Spleen (tissue), 13 donors: ENCODE measurements at regions of chr22 and their contacts with region 1.

Region 1: GRCh38 chr22:33579448-33580093 is 340.7 kb downstream of the LARGE1 start:
- DNase-seq: no peak
- H3K4me3 ChIP-seq: no peak overlapping the region
- H3K27ac ChIP-seq: peak overlapping the region in 1 of 8 donors; percentile 1
- H3K4me1 ChIP-seq: peaks cover 0 to 50% (median 10%) of the 10 kb centered on the region in 6 donors
- H3K27me3 ChIP-seq: no peaks in the 10 kb centered on the region
- CTCF ChIP-seq: peak; percentile 60 to 87 (median 82)
- POLR2A ChIP-seq: no peak

Region 2: DNA sequence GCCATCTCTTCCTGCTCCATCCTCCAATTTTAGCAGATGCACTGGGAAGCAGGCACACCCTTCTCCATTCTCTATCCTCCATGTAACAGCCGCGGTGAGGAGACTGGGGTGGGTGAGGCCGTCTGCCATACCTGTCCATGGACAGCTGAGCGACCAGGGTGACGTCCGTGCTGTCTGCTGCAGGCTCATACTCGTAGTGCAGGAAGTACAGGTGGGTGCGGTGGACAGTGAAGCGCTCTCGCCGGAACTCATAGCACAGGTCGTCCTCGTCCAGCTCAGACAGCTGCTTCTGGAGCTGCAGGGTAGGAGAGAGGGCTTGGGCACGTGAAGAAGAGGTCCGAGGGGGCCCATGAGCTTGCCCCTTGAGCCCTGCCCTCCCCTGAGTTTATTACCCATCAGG is 263.6 kb before region 1 on chr22:
- intact Hi-C with region 1: loop called (anchors 5 kb)
- DNase-seq: peak; percentile 67
- H3K4me3 ChIP-seq: no peak overlapping the region
- H3K27ac ChIP-seq: no peak overlapping the region
- H3K4me1 ChIP-seq: peaks cover 0 to 4% (median 0%) of the 10 kb centered on the region in 6 donors
- H3K27me3 ChIP-seq: no peaks in the 10 kb centered on the region
- CTCF ChIP-seq: no peak
- POLR2A ChIP-seq: no peak

Region 3: DNA sequence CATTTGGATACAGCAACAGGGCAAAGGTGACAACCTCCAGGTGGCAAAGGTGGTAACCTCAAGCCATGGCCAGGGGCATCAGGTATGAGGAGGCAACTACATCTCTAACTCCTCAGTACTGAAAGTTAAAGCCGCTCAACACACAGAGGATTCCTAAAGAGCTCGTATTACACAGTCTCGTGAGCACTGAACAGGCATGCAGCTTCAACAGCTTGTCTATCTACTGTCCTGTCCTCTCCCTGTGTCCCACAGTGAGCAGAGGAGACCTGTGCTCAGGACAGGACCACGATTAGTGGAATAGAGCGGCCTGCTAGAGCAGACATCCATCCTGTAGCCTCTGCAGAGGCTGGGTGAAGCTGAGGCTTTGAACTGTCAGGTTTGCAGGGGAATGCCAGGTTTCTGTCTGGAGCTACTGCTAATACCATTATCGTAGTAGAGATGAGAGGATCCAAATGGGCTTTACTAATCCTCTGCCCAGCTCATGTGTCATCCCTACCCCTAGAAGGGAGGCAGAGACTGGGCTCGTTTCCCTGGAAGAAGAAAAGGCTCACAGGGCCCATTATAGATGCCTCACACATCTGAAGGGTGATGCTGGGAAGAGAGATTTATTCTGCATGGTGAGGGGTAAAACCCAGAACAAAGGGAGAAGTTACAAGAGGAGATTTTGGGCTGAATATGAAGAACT is 74.5 kb before region 1 on chr22:
- intact Hi-C with region 1: no loop called
- DNase-seq: no peak
- H3K4me3 ChIP-seq: no peak overlapping the region
- H3K27ac ChIP-seq: no peak overlapping the region
- H3K4me1 ChIP-seq: no peaks in the 10 kb centered on the region
- H3K27me3 ChIP-seq: no peaks in the 10 kb centered on the region
- CTCF ChIP-seq: no peak
- POLR2A ChIP-seq: no peak

Region 4: DNA sequence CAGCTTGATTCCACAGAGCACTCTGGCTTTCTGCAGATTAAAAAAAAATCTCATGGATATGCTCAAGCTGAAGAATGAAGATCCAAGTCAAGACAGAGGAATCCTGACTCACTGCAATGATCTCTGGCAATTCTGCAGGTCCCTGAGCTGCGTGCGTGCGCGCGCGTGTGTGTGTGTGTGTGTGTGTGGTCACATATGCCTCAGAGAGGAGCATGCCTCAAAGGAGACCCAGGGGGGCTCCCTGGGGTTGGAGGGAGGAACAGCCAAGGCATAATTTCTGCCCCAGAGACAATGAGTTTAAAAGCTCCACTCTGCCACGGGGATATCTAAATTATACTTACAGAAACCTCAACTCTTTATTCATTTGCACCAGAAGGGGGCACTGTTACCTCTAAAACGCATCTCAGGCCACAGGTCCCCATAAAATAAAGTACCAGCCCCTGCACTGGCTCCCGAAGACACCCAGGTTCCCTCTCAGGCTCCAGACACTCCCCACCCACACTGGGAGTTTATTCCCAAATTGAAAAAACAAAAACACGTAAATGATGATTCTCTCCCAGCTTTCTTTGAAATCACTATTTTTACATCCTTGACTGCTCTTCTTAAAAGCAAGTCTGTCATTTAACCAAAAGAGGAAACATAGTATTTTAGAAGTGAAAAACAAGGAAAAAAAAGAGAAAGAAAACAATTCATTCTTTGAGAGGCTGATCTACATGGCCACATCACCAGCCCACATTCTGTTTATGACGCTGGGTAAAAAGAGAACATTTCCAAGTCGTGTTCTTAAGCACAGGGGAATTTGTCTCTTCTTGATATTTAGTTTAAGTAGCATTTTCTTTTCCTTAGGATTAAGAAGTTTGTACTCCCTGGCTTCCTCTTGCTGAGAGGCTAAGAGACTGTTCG is 60.2 kb before region 1 on chr22:
- intact Hi-C with region 1: loop called (anchors 5 kb)
- DNase-seq: no peak
- H3K4me3 ChIP-seq: no peak overlapping the region
- H3K27ac ChIP-seq: peak overlapping the region in 2 of 8 donors; percentile 40 to 53
- H3K4me1 ChIP-seq: peaks cover 0 to 56% (median 18%) of the 10 kb centered on the region in 6 donors
- H3K27me3 ChIP-seq: no peaks in the 10 kb centered on the region
- CTCF ChIP-seq: peak in 9 of 11 experiments; percentile 26 to 63 (median 53)
- POLR2A ChIP-seq: no peak